HAP-1 (cell line): ENCODE measurements at regions of chr5 and their contacts with region 1.

Region 1: DNA sequence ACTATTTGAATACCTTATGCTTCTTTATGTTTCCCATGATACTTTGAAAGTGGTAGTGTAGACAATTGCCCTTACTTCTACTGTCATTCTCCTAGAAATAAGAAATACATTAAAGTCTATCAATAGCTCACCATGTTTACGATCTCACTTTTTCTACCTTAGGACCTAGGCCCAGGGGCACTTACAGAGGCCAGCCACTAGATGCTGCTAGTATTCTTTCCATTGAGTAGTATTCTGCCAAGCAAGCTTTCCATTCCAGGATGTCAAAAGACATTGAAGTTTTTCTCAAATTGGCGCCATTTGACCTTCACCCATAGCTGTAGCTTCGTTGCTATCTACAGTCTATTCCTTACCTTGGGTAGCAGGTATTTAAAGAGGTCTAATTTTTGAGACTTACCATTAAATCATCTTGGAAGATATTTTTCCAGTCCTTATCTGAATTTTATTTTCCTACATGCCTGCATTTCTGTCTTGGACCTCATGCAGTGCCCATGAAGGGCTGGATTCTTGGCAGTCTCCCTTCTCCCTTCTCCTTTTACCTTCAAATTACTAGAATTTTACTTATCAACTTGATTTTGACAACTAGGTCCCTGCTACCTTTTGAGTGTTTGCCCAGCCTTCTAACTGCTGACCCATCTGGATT is 246.0 kb upstream of the NUDT12 start:
- DNase-seq: peak; percentile 62 to 69
- H3K4me3 ChIP-seq: no peak overlapping the region
- H3K4me1 ChIP-seq: no peaks in the 10 kb centered on the region
- H3K27me3 ChIP-seq: no peaks in the 10 kb centered on the region

Region 2: GRCh38 chr5:104178829-104179456 is 370.4 kb after region 1 on chr5:
- in situ Hi-C with region 1: loop called (anchors 10 kb)
- DNase-seq: peak; percentile 80 to 81
- H3K4me3 ChIP-seq: no peak overlapping the region
- H3K4me1 ChIP-seq: peaks cover 23% of the 10 kb centered on the region
- H3K27me3 ChIP-seq: no peaks in the 10 kb centered on the region